Astrocyte of the cerebellum (primary cell): ENCODE measurements at regions of chr10 and their contacts with region 1.

Region 1: DNA sequence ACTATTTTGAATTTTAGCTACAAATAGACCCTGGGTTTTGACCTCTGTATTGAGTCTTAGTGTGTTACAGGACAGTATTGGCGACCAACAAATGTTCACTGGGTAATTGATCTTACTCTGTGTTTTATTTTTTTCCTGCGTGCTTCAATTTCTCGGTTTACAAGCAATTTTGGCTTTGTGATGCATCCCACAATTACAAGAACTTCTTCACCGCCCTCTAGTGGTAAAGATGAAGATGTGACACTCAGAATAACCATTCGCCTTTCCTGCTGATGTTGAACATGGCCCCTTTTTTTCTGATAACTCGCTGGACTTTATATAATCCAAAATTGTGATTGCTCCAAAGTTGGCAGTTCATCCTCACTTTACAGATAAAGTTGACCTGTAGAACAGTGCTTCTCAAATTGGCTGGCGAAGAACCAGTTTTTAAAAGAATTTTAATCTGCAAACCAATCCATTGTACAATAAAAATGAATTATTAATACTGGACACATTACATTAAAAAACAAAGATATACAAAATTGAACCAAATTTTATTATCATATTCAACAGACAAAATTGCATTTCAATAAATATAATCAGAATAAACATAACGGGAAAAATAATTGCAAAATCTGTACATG is 20.2 kb upstream of the SMC3 start:
- DNase-seq: peak; percentile 59
- H3K4me3 ChIP-seq: no peak overlapping the region
- CTCF ChIP-seq: peak; percentile 74

Region 2: DNA sequence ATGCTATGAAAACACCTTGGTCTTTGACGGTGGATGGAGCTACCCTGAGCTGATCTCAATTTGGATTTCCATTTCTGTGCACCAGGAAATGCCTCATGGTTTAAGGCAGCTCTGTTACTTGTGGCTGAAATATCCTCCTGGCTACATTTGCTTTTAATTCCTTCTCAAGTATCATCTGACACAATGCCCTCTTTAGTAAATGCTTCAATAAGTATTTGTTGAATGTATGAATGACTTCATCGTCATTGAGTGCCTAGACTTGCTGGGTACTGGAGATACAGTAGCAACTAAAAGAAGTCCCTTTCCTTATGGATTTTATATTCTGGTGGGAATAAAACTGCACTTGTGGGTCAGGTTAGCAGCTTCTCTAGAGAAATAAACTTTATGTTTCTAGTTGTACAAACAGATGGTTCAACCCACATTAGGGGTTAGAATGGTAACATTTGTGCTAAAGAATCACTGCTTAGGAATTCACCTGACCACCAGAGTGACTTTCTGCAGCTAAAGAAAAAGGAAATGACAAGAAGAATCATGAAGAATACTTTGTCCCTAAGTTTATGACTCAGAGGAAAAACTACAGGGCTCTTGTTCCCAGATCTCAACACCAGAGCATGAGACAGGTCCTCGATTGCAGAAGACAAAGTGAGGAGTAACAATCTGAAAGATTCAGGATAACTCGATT is 220.8 kb before region 1 on chr10:
- in situ Hi-C with region 1: loop called (anchors 5 kb)
- DNase-seq: peak; percentile 61
- H3K4me3 ChIP-seq: no peak overlapping the region
- CTCF ChIP-seq: no peak

Region 3: DNA sequence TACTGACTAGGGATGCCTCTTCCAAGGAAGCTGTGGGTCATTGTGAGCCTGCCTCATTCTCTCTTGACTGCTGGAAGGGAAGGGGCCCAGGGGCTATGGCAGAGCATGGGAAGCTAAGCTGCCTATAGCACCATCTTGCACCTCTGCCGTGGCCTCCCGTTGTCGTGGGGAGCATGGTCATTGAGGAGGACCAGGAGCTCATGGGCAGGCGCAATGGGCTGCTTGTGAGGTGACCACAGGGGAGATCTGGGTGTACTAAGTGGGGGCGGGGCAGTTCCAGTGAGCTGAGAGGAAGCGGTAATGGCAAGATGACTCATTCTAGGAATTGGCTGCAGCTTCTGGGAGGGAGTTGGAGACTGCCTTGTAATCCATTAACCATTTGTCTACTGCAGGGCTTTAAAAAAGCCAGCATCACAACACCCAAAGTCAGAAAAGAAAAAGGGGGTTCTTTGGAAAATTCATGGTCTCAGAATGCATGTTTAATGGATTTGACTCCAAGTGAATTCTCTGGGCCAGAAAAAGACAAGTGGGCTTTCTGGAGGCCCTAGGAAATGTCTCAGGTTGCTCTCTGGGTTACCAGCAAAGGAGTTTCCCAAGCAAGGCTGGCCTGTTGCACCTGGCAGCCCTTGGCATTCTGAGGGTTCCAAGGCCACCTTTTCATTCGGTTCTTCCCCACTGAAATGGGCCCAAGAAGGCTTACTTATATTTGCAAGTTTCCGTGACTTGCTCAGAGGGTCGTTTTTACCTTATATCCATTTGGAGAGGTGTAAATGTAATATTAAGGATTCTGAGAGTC is 45.9 kb before region 1 on chr10:
- in situ Hi-C with region 1: loop called (anchors 5 kb)
- DNase-seq: peak; percentile 91
- H3K4me3 ChIP-seq: no peak overlapping the region
- CTCF ChIP-seq: no peak